ENCODE measurements at regions of chr7 and their contacts with region 1.

Region 1: GRCh38 chr7:148698397-148699023 is at the start of gene CUL1:
- DNase-seq: peak; percentile 75 to 82
- ATAC-seq: peak; percentile 74 to 82
- H3K4me3 ChIP-seq: peak within 1 kb of the TSS; percentile 56 to 81 (median 72)
- H3K27ac ChIP-seq: peak within 1 kb of the TSS; percentile 85 to 96 (median 92)
- H3K4me1 ChIP-seq: peaks cover 34 to 35% of the 10 kb centered on the region in 2 donors
- H3K27me3 ChIP-seq: no peaks in the 10 kb centered on the region
- CTCF ChIP-seq: no peak
- POLR2A ChIP-seq: peak; percentile 68 to 72
- total RNA-seq, gene CUL1: 78.7 to 101 (median 84.6) TPM

Region 2: DNA sequence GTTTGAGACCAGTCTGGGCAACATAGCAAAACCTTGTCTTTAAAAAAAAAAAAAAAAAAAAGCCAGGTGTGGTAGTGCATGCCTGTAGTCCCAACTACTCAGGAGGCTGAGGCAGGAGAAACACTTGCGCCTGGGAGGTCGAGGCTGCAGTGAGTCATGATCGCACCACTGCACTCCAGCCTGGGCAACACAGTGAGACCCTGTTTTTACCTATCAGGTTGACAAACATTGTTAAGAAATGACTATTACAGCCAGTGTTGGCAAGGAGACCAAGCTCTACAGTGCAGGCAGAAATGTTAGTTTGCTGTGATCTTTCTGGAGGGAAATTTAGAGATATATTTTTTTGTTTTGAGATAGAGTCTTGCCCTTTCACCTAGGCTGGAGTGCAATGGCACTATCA is 37.5 kb after region 1 on chr7:
- in situ Hi-C with region 1: no loop called
- intact Hi-C with region 1: loop called (anchors 2 kb)
- DNase-seq: no peak
- ATAC-seq: no peak
- H3K4me3 ChIP-seq: no peak overlapping the region
- H3K27ac ChIP-seq: peak overlapping the region in 1 of 4 donors; percentile 72
- H3K4me1 ChIP-seq: peaks cover 59 to 61% of the 10 kb centered on the region in 2 donors
- H3K27me3 ChIP-seq: no peaks in the 10 kb centered on the region
- CTCF ChIP-seq: no peak
- POLR2A ChIP-seq: no peak

Region 3: DNA sequence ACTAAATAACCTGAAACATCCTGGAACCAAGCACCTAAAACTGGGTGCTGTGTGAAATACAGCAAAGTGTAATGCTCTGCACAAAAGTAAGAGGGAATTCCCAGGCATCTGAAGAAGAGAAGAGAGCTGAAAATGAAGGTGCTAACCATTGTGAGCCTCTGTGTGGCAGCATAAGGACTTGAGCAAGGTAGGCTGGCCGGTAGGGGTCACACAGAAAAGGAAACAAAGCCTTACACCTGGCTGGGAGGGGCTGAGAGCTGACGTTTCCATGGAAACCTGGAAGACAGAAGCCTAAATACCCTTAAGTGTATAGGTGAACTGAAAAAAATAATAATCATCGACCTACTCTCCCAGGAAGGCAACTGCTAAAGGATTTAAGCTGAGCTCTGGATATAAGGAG is 48.8 kb after region 1 on chr7:
- in situ Hi-C with region 1: no loop called
- intact Hi-C with region 1: no loop called
- DNase-seq: no peak
- ATAC-seq: no peak
- H3K4me3 ChIP-seq: no peak overlapping the region
- H3K27ac ChIP-seq: no peak overlapping the region
- H3K4me1 ChIP-seq: peaks cover 10 to 12% of the 10 kb centered on the region in 2 donors
- H3K27me3 ChIP-seq: no peaks in the 10 kb centered on the region
- CTCF ChIP-seq: no peak
- POLR2A ChIP-seq: no peak